Activated B cell treated with CpG ODN at 0.5 μM for 24 hours (primary cell): ENCODE measurements at regions of chr14 and their contacts with region 1.

Region 1: DNA sequence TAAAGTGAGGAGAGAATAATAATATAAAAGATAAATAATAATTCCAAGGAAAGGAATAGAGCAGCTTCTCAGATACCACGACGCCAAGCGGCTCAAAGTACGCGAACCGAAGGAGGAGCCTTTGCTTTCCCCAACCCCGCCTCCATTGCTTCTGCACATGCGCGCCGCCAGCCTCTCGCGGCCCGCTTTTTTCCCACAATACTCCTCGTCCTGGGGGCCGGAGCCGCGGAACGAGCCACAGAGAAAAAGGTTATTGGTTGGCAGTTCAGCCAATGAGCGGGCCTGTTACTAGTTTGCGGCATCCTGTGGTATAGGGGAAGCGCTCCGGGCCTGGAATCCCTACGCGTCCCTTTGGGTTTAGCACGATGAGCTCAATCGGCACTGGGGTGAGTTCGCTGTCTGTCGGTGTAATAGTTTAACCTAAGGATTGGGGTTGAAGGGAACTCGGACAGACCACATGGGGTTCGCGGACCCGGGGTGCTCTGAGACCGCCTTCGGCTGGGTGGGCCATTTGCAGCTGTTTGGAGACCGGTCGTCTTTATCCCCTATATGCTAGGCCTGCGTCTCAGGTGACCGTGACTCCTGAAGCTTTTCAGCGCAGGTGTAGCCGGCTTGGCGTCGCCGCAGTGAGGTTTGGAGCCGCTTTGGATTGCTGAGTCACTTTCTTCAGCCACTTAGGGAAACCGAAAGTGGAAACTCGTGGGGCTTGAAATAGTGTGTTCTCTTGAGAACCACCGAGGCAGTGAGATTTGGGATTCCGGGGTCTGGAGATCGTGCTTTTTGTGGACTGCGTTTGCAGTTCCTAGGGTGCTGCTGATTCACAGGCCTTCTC is at the start of gene PSMA3:
- DNase-seq: peak; percentile 94
- ATAC-seq: peak; percentile 91
- H3K4me3 Mint-ChIP-seq: peak within 1 kb of the TSS; percentile 98
- H3K27ac Mint-ChIP-seq: peak within 1 kb of the TSS; percentile 98
- H3K4me1 Mint-ChIP-seq: peaks cover 51% of the 10 kb centered on the region
- H3K27me3 Mint-ChIP-seq: peaks cover 1% of the 10 kb centered on the region
- CTCF ChIP-seq: no peak
- total RNA-seq, gene PSMA3: 204 and 208 TPM in 2 replicates

Region 2: DNA sequence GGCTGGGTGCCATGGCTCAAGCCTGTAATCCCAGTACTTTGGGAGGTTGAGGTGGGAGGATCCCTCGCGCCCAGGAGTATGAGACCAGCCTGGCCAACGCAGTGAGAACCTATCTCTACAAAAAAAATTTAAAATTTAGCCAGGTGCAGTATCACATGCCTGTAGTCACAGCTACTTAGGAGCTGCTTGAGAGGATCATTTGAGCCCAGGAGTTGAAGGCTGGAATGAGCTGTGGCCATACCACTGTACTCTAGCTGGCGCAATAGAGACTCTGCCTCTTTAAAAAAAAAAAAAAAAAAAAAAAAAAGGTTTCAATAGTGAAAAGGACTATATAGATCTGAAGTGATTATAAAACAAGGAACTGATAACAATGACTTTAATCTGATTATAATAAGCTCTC is 13.4 kb after region 1 on chr14:
- CTCF ChIA-PET with region 1: no interaction called
- POLR2A ChIA-PET with region 1: interaction called, 3 read pairs
- intact Hi-C with region 1: loop called (anchors 2 kb)
- DNase-seq: no peak
- ATAC-seq: no peak
- H3K4me3 Mint-ChIP-seq: no peak overlapping the region
- H3K27ac Mint-ChIP-seq: no peak overlapping the region
- H3K4me1 Mint-ChIP-seq: no peaks in the 10 kb centered on the region
- H3K27me3 Mint-ChIP-seq: no peaks in the 10 kb centered on the region
- CTCF ChIP-seq: no peak

Region 3: GRCh38 chr14:58280954-58281787 is 36.4 kb after region 1 on chr14:
- CTCF ChIA-PET with region 1: no interaction called
- POLR2A ChIA-PET with region 1: no interaction called
- intact Hi-C with region 1: loop called (anchors 2 kb)
- DNase-seq: no peak
- ATAC-seq: peak; percentile 90
- H3K4me3 Mint-ChIP-seq: peak overlapping the region; percentile 71
- H3K27ac Mint-ChIP-seq: peak overlapping the region; percentile 95
- H3K4me1 Mint-ChIP-seq: peaks cover 34% of the 10 kb centered on the region
- H3K27me3 Mint-ChIP-seq: no peaks in the 10 kb centered on the region
- CTCF ChIP-seq: no peak

Region 4: GRCh38 chr14:58408681-58409215 is 164.0 kb after region 1 on chr14:
- CTCF ChIA-PET with region 1: no interaction called
- POLR2A ChIA-PET with region 1: no interaction called
- intact Hi-C with region 1: no loop called
- DNase-seq: no peak
- ATAC-seq: no peak
- H3K4me3 Mint-ChIP-seq: no peak overlapping the region
- H3K27ac Mint-ChIP-seq: no peak overlapping the region
- H3K4me1 Mint-ChIP-seq: no peaks in the 10 kb centered on the region
- H3K27me3 Mint-ChIP-seq: no peaks in the 10 kb centered on the region
- CTCF ChIP-seq: no peak